Activated CD8-positive, alpha-beta memory T cell treated with anti-CD3 and anti-CD28 coated beads, Interleukin-2, amount 10 ng/mL, durations not matched to agents 7 days and 5 days (primary cell): ENCODE measurements at regions of chr5 and their contacts with region 1.

Region 1: DNA sequence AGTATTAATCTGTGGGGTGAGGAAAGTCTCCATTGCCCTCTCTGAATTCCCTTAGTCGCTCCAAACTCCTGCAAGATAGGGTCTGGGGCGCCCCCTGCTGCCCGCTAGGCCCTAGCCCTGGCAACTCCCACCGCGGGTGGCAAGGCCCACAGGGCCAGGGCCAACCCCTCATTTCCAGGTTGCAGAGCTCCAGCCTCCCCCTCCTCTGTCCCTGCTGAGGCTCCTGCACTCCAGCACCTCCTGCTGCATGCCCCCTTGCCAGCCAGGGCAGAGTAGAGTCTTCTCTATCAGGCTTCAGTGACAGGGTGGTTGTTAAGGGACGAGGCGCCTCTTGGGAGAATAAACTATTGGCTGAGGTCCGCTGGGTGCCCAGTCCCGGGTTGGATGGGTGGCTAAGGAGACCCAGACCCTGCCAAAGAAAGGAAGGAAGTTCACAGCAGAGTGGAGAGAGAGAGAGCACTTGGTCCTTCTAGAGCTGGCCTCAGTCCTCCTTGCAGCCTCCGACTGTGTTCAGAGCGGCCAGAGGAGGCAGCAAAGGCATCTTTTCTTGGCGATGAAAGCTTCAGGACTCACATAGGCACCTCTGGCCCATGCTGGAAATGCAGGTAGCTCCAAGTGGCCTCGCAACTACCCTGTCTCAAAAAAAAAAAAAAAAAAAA is 45.6 kb downstream of the SAR1B start:
- DNase-seq: peak; percentile 89
- ATAC-seq: peak; percentile 92
- H3K4me3 Mint-ChIP-seq: no peak overlapping the region
- H3K27ac Mint-ChIP-seq: peak overlapping the region; percentile 52
- H3K4me1 Mint-ChIP-seq: peaks cover 18% of the 10 kb centered on the region
- H3K27me3 Mint-ChIP-seq: no peaks in the 10 kb centered on the region

Region 2: DNA sequence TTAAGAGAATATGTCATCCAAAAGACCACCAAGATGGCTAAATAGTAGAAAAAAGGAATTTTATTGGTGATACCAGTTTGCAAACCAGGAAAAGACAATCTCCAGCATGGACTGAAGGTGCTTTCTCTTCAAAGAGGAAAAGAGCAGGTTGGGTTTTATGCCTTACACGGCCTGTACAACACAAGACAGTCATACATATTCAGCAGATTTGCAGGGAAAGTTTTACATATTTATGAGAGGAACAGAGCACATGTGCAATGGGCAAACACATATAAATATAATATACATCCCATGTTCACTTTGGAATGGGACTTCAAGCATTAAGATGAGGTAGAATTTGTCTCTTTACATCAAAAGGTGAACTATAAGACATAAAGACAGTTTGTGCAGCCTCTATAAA is 290.8 kb before region 1 on chr5:
- CTCF ChIA-PET with region 1: interaction called, 20 read pairs
- DNase-seq: no peak
- ATAC-seq: no peak
- H3K4me3 Mint-ChIP-seq: no peak overlapping the region
- H3K27ac Mint-ChIP-seq: no peak overlapping the region
- H3K4me1 Mint-ChIP-seq: no peaks in the 10 kb centered on the region
- H3K27me3 Mint-ChIP-seq: peaks cover 9% of the 10 kb centered on the region

Region 3: DNA sequence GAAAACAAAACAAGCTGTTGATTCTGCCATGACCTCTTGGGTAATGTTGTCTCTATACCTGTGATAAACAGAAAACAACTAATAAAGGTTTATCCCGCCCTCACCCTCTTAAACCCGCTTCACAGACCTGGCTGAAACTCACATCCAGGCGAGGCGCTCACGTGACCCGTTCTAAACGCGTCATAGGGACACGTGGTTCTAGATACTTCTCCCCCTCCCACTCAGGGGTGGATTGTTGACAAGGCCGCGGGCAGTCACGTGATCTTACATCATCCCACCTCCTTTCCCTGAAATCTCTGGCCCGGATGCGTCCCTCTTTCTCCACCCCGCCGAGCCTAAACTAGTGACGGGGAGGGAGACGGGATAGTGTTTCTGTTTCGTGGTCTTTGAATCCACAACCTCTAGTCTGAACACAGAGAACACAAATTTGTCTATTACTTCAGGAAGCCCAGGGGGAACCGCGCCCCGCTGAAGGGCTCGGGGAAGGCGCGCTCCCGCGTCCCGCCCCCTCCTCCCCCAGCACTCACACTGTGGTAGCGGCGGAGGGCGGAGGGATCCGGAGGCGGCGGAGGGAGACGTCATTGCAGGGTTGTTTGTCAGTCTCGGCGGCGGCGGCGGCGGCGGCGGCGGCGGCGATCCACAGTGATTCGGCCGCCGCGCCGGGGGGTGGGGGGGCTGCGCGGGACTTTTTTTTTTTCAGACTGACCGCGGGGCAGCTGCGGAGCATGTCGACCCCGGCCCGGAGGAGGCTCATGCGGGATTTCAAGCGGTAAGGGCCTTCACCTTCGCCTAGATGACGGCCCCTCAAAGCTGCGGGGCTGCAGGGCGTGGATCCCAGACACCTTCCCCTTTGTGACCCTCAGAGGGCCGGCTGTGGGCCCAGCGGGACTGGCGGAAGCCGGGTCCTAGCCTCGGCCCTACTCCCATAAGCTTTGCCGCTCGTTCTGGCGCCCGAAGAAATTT is 215.8 kb before region 1 on chr5 and contains the start of gene UBE2B:
- CTCF ChIA-PET with region 1: interaction called, 16 read pairs
- DNase-seq: peak; percentile 99
- ATAC-seq: peak; percentile 77
- H3K4me3 Mint-ChIP-seq: peak within 1 kb of the TSS; percentile 98
- H3K27ac Mint-ChIP-seq: peak within 1 kb of the TSS; percentile 99
- H3K4me1 Mint-ChIP-seq: peaks cover 45% of the 10 kb centered on the region
- H3K27me3 Mint-ChIP-seq: no peaks in the 10 kb centered on the region
- total RNA-seq, gene UBE2B: 74.6 to 84.8 TPM

Region 4: GRCh38 chr5:134430001-134430569 is 156.9 kb before region 1 on chr5:
- CTCF ChIA-PET with region 1: interaction called, 11 read pairs
- DNase-seq: no peak
- ATAC-seq: peak; percentile 16
- H3K4me3 Mint-ChIP-seq: no peak overlapping the region
- H3K27ac Mint-ChIP-seq: no peak overlapping the region
- H3K4me1 Mint-ChIP-seq: peaks cover 13% of the 10 kb centered on the region
- H3K27me3 Mint-ChIP-seq: peaks cover 10% of the 10 kb centered on the region

Region 5: GRCh38 chr5:134609232-134609851 is 22.3 kb after region 1 on chr5:
- CTCF ChIA-PET with region 1: interaction called, 46 read pairs
- DNase-seq: no peak
- ATAC-seq: peak; percentile 62
- H3K4me3 Mint-ChIP-seq: peak overlapping the region; percentile 31
- H3K27ac Mint-ChIP-seq: peak overlapping the region; percentile 92
- H3K4me1 Mint-ChIP-seq: peaks cover 47% of the 10 kb centered on the region
- H3K27me3 Mint-ChIP-seq: no peaks in the 10 kb centered on the region

Region 6: GRCh38 chr5:134738133-134738962 is 151.4 kb after region 1 on chr5 and contains the start of gene CAMLG:
- CTCF ChIA-PET with region 1: interaction called, 22 read pairs
- DNase-seq: peak; percentile 99
- ATAC-seq: peak; percentile 98
- H3K4me3 Mint-ChIP-seq: peak within 1 kb of the TSS; percentile 97
- H3K27ac Mint-ChIP-seq: peak within 1 kb of the TSS; percentile 91
- H3K4me1 Mint-ChIP-seq: peaks cover 29% of the 10 kb centered on the region
- H3K27me3 Mint-ChIP-seq: no peaks in the 10 kb centered on the region
- total RNA-seq, gene CAMLG: 20.4 to 28.4 TPM

Region 7: DNA sequence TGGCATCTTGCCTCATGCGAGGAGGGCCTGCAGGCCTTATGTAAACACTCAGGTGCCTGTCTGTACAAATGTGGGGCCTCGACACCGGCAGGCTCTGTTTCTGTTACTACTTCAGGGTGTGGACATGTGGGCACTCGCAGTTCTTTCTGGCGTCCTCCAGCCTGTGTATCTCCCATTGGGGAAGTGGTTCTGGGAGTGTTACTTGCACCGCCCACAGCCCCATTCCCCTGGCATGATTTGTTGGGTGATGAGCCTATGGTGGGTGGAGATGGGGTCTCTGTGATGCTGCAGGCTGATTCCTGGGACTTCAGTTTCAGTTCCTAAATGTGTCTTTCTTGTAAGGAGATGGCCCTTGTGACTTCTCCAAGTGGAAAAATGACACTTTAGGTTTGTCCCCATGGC is 529.2 kb after region 1 on chr5:
- CTCF ChIA-PET with region 1: no interaction called
- DNase-seq: no peak
- ATAC-seq: no peak
- H3K4me3 Mint-ChIP-seq: no peak overlapping the region
- H3K27ac Mint-ChIP-seq: no peak overlapping the region
- H3K4me1 Mint-ChIP-seq: no peaks in the 10 kb centered on the region
- H3K27me3 Mint-ChIP-seq: peaks cover 12% of the 10 kb centered on the region